WTC11 (cell line): ENCODE measurements at regions of chr13 and their contacts with region 1.

Region 1: DNA sequence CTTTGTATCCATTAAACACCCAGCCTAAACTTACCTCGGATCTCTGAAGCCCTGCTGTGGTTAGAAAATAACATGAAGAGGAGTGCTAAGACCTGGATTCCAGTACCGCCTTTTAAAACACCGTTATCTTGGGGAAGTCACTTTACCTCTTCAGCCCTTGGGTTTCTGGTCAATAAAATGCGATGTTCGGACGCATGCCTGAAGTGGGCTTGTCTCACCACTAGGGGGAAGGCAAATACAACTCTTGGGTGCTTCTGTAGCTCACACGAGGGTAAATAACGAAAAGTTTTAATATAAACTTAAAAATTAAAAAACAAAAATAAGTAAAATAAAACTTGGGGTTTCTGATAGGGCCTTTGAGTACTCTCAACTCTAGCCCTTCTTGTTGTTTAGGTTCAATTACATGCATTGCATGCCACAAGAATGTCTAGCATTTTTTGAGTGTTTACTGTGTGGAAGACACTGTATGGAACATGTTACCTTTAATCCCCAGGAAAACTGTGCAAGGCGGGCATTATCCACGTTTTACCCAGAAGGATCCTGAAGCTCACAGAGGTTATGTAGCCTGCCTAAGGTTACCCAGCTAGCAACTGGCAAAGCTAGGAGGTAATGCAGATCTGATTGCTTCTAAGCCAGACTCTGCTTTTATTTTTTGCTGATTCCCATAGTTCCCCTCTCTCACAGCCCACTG is 240.4 kb downstream of the LMO7 start:
- DNase-seq: peak; percentile 67
- ATAC-seq: peak; percentile 92
- H3K4me3 Mint-ChIP-seq: no peak overlapping the region
- H3K27ac Mint-ChIP-seq: no peak overlapping the region
- H3K4me1 Mint-ChIP-seq: peaks cover 41% of the 10 kb centered on the region
- H3K27me3 Mint-ChIP-seq: 0 out of 2 replicates have a peak, but pooled peaks cover 3% of the 10 kb centered on the region
- CTCF ChIP-seq: peak; percentile 83

Region 2: GRCh38 chr13:75694722-75695121 is 181.8 kb before region 1 on chr13:
- CTCF ChIA-PET with region 1: interaction called, 19 read pairs
- POLR2A ChIA-PET with region 1: no interaction called
- DNase-seq: no peak
- ATAC-seq: no peak
- H3K4me3 Mint-ChIP-seq: no peak overlapping the region
- H3K27ac Mint-ChIP-seq: peak overlapping the region; percentile 0; the same call in 1 of the 2 replicates
- H3K4me1 Mint-ChIP-seq: peaks cover 15% of the 10 kb centered on the region
- H3K27me3 Mint-ChIP-seq: no peaks in the 10 kb centered on the region; the same call in 1 of the 2 replicates
- CTCF ChIP-seq: no peak

Region 3: GRCh38 chr13:75889427-75889826 is 12.9 kb after region 1 on chr13:
- CTCF ChIA-PET with region 1: interaction called, 12 read pairs
- POLR2A ChIA-PET with region 1: interaction called, 3 read pairs
- DNase-seq: no peak
- ATAC-seq: peak; percentile 73
- H3K4me3 Mint-ChIP-seq: no peak overlapping the region
- H3K27ac Mint-ChIP-seq: no peak overlapping the region
- H3K4me1 Mint-ChIP-seq: peaks cover 58% of the 10 kb centered on the region
- H3K27me3 Mint-ChIP-seq: no peaks in the 10 kb centered on the region; the same call in none of the 2 replicates
- CTCF ChIP-seq: no peak

Region 4: GRCh38 chr13:75963325-75963724 is 86.8 kb after region 1 on chr13:
- CTCF ChIA-PET with region 1: no interaction called
- POLR2A ChIA-PET with region 1: no interaction called
- DNase-seq: no peak
- ATAC-seq: no peak; the same call in 1 of the 2 replicates
- H3K4me3 Mint-ChIP-seq: no peak overlapping the region
- H3K27ac Mint-ChIP-seq: peak overlapping the region; percentile 57
- H3K4me1 Mint-ChIP-seq: peaks cover 13% of the 10 kb centered on the region
- H3K27me3 Mint-ChIP-seq: no peaks in the 10 kb centered on the region
- CTCF ChIP-seq: no peak

Region 5: DNA sequence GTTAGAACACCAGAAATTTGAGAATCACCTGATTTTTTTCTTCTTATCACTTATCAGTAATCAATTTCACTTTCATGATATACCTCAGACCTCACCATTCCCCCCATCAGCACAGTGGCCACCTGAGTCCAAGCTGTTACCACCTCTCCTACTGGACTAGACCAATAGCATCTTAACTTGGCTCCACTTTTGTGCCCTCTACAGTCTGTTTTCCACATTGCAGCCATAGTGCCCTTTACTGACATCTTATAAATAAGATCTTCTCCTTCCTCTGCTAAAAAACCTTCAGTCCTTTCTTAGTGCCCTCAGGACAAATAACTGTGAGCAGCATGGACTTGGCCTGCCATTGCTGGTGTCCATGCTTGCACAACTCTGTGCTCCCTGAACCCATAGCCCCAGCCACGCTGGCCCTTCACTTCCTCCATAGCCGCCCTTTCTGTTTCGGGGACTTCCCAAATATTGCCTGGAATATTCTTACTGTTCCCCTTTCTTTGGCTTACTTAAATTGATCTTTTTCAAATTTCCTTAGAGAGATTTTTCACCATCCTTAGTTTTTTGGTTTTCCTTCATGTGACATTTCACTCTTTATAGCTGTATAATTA is 140.4 kb after region 1 on chr13:
- CTCF ChIA-PET with region 1: interaction called, 22 read pairs
- POLR2A ChIA-PET with region 1: no interaction called
- DNase-seq: peak; percentile 58
- ATAC-seq: peak; percentile 78
- H3K4me3 Mint-ChIP-seq: no peak overlapping the region
- H3K27ac Mint-ChIP-seq: no peak overlapping the region
- H3K4me1 Mint-ChIP-seq: peaks cover 6% of the 10 kb centered on the region
- H3K27me3 Mint-ChIP-seq: no peaks in the 10 kb centered on the region
- CTCF ChIP-seq: 0 out of 2 replicates have a peak, but pooled peaks have one; percentile 30

Region 6: DNA sequence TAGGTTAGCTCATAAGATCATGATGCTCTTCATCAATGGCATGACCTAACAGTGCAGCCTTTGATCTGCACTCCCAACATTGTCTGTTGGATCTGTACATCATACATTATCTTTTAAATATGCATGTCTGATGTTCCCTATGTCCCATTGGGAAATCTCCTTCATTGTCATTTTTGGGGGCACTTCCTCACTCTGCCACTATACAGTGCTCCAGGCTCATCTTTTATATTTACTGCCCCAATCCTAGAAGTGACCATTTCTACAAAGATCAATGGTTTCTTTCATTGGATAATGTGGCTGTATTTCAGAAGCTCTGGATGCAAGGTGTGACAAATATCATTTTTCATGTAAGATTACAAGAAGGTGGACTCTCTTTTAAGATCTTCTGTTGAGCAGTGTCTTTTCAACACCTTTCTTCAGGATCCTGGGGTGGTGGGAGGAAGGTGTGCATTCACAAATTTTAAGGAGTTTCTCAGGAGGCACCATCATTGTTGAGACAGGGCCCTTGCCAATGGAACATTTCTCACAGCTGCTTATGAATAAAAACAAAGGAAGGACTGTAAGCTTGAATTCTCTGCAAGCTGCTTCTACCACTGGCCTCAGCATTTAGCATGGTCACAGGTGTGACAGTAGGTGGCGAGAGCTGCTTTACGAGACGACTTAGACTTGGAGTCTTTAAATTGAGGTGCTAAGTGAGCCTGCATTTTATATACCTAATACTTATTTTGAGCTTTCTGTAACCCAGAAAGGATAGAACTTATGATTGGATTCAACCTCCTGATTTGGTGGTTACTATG is 162.6 kb after region 1 on chr13:
- CTCF ChIA-PET with region 1: interaction called, 11 read pairs
- POLR2A ChIA-PET with region 1: no interaction called
- DNase-seq: peak; percentile 31
- ATAC-seq: peak; percentile 95
- H3K4me3 Mint-ChIP-seq: no peak overlapping the region
- H3K27ac Mint-ChIP-seq: no peak overlapping the region
- H3K4me1 Mint-ChIP-seq: peaks cover 4% of the 10 kb centered on the region
- H3K27me3 Mint-ChIP-seq: no peaks in the 10 kb centered on the region
- CTCF ChIP-seq: no peak